ENCODE measurements at regions of chr7 and their contacts with region 1.

Region 1: GRCh38 chr7:138014686-138015085 is 12.8 kb upstream of the CREB3L2 start:
- DNase-seq: no peak
- ATAC-seq: no peak

Region 2: DNA sequence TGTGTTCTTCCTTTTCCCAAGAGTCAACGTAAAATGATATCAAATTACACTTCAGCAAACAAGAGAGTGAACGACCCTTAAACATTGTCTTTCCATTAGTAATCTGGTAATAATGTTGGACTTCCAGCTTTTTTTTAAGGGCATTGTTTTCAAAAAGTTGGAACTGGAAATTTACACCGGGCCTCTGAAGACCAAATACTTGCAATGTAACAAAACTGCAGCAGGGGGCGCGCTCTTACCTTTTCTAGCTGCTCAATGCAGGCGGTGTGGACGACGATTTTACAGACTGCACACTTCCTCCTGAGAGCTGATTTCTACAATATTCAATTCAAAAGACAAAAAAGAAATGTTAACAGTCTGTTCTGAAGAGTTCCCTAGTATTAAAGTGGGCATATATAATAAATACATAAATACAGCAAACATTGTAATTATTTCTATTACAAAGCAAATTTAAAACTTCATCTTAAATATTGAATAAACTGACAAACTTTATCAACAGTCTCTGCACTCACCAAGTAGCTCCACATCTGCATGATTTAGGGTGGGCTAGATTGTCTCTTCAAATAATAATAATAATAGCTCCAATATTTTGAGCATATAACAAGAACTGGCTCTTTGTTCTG is 358.3 kb before region 1 on chr7:
- intact Hi-C with region 1: loop called (anchors 5 kb)
- DNase-seq: peak; percentile 90
- ATAC-seq: peak; percentile 85

Measured in sciatic nerve (tissue), 2 donors.